ENCODE measurements at regions of chr6 and their contacts with region 1.

Region 1: GRCh38 chr6:101676187-101676586 is 282.7 kb downstream of the GRIK2 start:
- DNase-seq: no peak
- H3K4me3 ChIP-seq: no peak overlapping the region
- CTCF ChIP-seq: no peak
- POLR2A ChIP-seq: no peak

Region 2: DNA sequence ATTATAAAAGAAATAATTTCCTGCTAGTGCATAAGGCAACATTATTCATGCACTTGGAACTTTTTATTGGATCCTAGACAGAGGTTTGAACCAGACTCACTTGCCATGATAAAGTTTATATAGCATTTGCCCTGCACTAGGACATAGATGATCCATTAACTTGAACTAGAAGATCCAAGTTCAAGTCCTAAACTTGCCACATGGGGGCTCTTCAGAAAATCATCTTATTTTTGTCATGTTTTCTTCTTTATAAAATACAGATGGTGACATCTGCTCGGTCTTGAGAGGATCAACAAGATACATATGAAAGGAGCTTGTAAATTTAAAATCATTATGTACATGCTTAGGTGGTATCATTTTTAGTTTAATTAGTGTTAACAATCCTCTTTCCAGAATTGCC is 1305.9 kb before region 1 on chr6:
- intact Hi-C with region 1: loop called (anchors 10 kb)
- DNase-seq: no peak
- H3K4me3 ChIP-seq: no peak overlapping the region
- CTCF ChIP-seq: no peak
- POLR2A ChIP-seq: no peak

Measured in lower leg skin (tissue), 4 donors.